ENCODE measurements at regions of chr15 and their contacts with region 1.

Region 1: DNA sequence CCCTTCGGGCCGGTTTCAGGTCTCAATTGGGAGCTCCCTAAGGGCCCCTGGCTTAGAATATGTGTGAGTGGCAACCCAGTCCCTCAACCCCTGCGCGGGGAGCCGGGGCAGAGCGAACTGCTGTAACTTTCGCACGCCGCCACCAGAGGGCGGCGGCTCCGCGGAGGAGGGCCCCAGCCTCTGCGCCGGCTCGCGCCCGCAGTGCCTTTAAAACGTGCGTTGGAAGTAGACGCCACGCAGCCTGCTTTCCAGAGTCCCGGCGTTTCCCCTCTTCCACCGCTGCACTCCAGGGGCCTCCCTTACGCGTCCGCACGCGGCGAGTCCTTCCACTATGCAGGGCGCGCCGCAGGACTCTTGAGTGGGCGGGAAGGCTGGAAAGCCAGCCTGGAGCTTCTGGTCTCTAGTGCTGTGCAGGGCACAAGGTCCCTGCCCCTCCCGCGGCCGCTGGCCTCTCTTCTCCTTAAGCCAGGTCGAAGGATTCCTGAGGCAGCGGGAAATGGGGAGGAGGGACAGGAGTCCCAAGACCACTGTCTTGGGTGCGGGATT is 23.7 kb upstream of the RNU6-1 start:
- DNase-seq: no peak
- ATAC-seq: peak; percentile 97
- H3K4me3 ChIP-seq: peak overlapping the region; percentile 33 to 62
- H3K27ac ChIP-seq: peak overlapping the region; percentile 89
- H3K4me1 ChIP-seq: peaks cover 27% of the 10 kb centered on the region
- H3K27me3 ChIP-seq: no peaks in the 10 kb centered on the region
- CTCF ChIP-seq: peak; percentile 97

Region 2: GRCh38 chr15:67892559-67893377 is 29.3 kb after region 1 on chr15:
- CTCF ChIA-PET with region 1: no interaction called
- POLR2A ChIA-PET with region 1: no interaction called
- in situ Hi-C with region 1: no loop called
- intact Hi-C with region 1: no loop called
- DNase-seq: no peak
- ATAC-seq: no peak
- H3K4me3 ChIP-seq: no peak overlapping the region
- H3K27ac ChIP-seq: peak overlapping the region; percentile 30
- H3K4me1 ChIP-seq: peaks cover 3% of the 10 kb centered on the region; the same call in 1 of the 2 replicates
- H3K27me3 ChIP-seq: no peaks in the 10 kb centered on the region
- CTCF ChIP-seq: no peak

Region 3: DNA sequence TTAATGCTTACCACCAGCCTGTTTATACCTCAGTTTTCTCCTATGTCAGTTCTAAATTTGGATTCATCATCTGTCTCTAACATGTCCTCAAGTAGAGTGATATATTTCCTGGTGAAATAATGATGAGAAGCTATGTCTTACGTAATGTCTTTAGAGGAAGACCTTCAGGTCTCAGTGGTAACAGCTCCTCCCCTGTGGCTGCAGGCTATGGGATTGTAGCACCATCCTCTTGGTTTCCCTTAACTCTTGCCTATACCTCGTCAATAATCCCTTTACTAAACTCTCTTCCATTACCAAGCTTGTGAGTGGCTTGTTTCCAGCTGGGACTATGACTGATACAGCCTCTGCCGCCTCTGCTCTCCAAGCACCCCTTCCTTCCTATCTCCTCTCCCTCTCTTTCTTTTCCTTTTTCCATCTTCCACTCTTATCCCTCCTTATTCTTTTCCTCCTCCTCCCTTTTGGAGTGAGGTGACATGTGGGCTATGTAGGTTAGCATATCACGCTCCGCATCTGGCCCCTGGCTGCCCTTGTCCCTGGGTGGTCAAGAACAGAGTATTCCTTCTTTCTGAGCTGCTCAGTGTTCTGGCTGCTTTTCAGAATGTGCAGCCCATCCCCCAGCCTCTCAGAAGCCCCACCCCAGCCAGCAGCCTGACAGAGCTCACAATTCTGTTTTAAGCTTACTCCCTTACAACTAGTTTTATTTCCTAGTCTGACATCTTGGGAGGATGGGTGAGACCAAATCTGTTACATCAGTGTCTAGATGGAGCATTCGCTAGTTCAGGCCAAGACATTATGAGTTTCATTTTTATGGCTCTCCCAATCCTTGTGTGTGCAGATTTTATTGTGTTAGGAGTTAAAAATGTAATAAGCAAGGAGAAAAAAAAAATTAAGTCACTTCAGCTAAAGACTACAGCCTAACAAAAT is 51.3 kb after region 1 on chr15:
- CTCF ChIA-PET with region 1: no interaction called
- POLR2A ChIA-PET with region 1: interaction called, 19 read pairs
- in situ Hi-C with region 1: no loop called
- intact Hi-C with region 1: loop called (anchors 5 kb)
- DNase-seq: peak; percentile 17
- ATAC-seq: peak; percentile 82
- H3K4me3 ChIP-seq: peak overlapping the region in 1 of 2 experiments; percentile 27; a peak in 2 of 4 replicates
- H3K27ac ChIP-seq: peak overlapping the region; percentile 99
- H3K4me1 ChIP-seq: peaks cover 35% of the 10 kb centered on the region
- H3K27me3 ChIP-seq: no peaks in the 10 kb centered on the region
- CTCF ChIP-seq: no peak

Region 4: DNA sequence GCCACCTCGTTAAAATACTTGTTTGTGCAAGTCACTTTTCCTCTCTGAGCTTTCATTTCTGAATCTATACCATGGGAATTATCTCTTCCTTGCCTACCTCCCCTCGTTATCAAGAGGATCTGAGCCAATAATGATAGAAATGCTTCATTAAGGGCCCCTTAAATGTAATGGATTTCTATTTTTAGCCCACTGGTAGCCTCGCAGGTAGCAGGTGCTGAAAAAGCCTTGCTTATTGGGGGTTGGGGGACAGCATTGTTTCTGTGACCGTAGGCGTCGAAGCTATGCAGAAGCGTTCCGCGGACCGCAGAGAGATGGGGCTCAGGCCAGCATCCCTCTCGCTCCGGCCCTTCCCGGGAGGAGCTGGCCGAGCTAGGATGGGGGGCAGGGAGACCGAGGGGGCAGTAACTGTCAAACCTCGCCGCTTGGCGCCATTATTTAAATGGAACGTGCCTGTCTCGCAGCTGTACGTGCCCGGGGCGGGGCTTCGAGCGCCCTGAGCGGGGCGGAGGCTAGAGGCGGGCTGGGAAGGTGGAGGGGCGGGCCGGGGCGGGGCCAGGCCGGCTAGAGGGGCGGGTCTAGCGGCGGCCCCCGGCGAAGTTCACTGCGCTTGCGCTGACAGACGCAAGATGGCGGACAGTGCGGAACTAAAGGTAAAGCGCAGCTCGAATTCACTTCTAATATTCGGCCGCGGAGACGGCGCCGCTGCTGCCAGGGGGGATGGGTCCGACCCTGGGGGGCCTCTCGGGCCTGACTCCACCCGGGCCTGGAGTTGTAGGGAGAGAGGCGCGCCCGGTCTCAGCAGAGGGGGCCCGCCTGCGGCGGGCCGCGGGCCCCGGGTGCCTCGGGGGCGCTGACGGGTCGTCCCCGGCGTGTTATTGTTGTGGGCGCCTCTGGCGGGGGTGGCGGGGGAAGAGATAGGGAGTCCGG is 190.4 kb after region 1 on chr15 and contains the start of gene PIAS1:
- CTCF ChIA-PET with region 1: interaction called, 3 read pairs
- POLR2A ChIA-PET with region 1: no interaction called
- in situ Hi-C with region 1: no loop called
- intact Hi-C with region 1: loop called (anchors 5 kb)
- DNase-seq: peak; percentile 41
- ATAC-seq: peak; percentile 96
- H3K4me3 ChIP-seq: peak within 1 kb of the TSS; percentile 61 to 87
- H3K27ac ChIP-seq: peak within 1 kb of the TSS; percentile 89
- H3K4me1 ChIP-seq: peaks cover 44% of the 10 kb centered on the region
- H3K27me3 ChIP-seq: no peaks in the 10 kb centered on the region
- CTCF ChIP-seq: no peak; the same call in 1 of the 2 replicates
- total RNA-seq, gene PIAS1: 44.5 TPM

Region 5: DNA sequence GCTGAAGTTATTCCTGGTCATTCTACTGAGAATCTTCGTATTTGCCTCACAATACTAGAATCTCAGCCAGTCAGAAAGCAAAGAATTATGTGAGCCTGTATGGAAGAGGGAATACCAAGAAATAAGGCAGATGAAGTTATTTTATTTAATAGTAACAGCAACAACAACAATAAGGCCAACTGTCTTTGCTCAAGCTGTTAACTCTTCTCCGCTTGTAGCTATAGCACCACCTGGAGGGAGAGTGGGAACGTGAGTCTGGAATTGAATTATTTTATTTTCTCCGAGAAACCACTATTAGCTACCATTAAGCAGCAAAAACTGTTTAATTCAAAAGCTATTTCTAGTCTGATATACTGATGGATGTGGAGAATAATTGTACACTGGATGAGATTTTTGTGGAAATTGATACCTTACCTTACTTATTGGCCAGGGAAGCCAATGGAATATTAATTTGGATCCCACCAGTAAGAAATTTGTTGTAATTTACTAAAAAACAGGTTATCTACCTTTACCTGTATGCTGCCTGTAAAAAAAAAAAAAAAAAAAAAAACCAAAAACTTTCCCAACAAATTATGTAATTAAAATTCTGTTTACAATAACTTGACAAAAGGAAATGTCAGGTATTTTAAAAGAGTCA is 291.5 kb after region 1 on chr15:
- CTCF ChIA-PET with region 1: interaction called, 10 read pairs
- POLR2A ChIA-PET with region 1: interaction called, 3 read pairs
- in situ Hi-C with region 1: no loop called
- intact Hi-C with region 1: loop called (anchors 2 kb)
- DNase-seq: peak; percentile 30
- ATAC-seq: peak; percentile 80
- H3K4me3 ChIP-seq: no peak overlapping the region
- H3K27ac ChIP-seq: peak overlapping the region; percentile 73
- H3K4me1 ChIP-seq: peaks cover 7% of the 10 kb centered on the region
- H3K27me3 ChIP-seq: no peaks in the 10 kb centered on the region
- CTCF ChIP-seq: peak; percentile 79; the same call in 1 of the 2 replicates

Measured in Panc1 (cell line).